Activated CD4-positive, alpha-beta memory T cell treated with anti-CD3 and anti-CD28 coated beads for 36 hours (primary cell): ENCODE measurements at regions of chr1 and their contacts with region 1.

Region 1: GRCh38 chr1:3453203-3453761 is 1.2 kb upstream of the ARHGEF16 start:
- DNase-seq: peak; percentile 81
- H3K4me3 Mint-ChIP-seq: no peak overlapping the region
- H3K27ac Mint-ChIP-seq: no peak overlapping the region
- H3K4me1 Mint-ChIP-seq: peaks cover 2% of the 10 kb centered on the region
- H3K27me3 Mint-ChIP-seq: peaks cover 13% of the 10 kb centered on the region

Region 2: GRCh38 chr1:3471302-3472087 is 18.2 kb after region 1 on chr1:
- CTCF ChIA-PET with region 1: interaction called, 12 read pairs
- POLR2A ChIA-PET with region 1: no interaction called
- intact Hi-C with region 1: no loop called
- DNase-seq: no peak
- H3K4me3 Mint-ChIP-seq: no peak overlapping the region
- H3K27ac Mint-ChIP-seq: no peak overlapping the region
- H3K4me1 Mint-ChIP-seq: no peaks in the 10 kb centered on the region
- H3K27me3 Mint-ChIP-seq: no peaks in the 10 kb centered on the region

Region 3: DNA sequence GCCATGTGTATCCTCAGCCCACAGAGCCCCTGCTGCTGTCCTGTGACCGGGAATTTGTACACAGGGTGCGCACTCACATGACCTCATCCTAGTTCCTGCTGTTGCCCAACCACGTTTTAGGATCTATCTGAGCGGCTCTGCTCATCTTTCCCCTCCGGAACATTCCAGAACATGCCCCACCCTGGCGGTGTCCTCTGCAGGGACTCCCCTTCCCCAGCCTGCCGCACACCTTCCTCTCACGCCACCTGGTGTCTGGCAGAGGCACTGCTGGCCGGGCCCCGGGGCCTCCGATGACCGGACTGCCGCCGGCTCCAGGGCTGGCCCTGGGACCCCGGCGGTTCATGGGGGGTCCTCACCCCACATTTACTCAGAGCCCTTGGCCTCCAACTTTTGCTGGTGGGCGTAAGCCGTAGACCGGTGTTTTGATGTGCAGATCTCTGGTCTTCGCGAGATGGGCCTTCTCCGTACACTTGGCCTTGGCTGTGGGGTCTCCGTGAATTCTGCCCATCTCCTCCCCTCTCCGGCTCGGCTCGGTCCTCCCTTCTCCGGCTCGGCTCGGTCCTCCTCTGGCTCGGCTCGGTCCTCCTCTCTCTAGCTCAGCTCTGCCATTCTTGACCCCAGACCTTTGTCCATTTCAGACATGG is 30.6 kb after region 1 on chr1:
- CTCF ChIA-PET with region 1: interaction called, 45 read pairs
- POLR2A ChIA-PET with region 1: interaction called, 3 read pairs
- intact Hi-C with region 1: loop called (anchors 2 kb)
- DNase-seq: peak; percentile 55
- H3K4me3 Mint-ChIP-seq: no peak overlapping the region
- H3K27ac Mint-ChIP-seq: no peak overlapping the region
- H3K4me1 Mint-ChIP-seq: no peaks in the 10 kb centered on the region
- H3K27me3 Mint-ChIP-seq: no peaks in the 10 kb centered on the region